Naive thymus-derived CD4-positive, alpha-beta T cell (primary cell): ENCODE measurements at regions of chr7 and their contacts with region 1.

Region 1: GRCh38 chr7:36677769-36678437 is 46.4 kb downstream of the AOAH start:
- DNase-seq: peak in 5 of 9 donors; percentile 5 to 68 (median 25)
- ATAC-seq: peak; percentile 19
- H3K4me3 ChIP-seq: peak overlapping the region; percentile 5
- H3K4me3 Mint-ChIP-seq: peak overlapping the region; percentile 46 to 84 (median 67)
- H3K27ac ChIP-seq: peak overlapping the region; percentile 55
- H3K27ac Mint-ChIP-seq: peak overlapping the region; percentile 83 to 98 (median 89)
- H3K4me1 ChIP-seq: peaks cover 14 to 29% of the 10 kb centered on the region in 2 donors
- H3K4me1 Mint-ChIP-seq: peaks cover 12 to 72% (median 57%) of the 10 kb centered on the region in 7 donors
- H3K27me3 ChIP-seq: no peaks in the 10 kb centered on the region
- H3K27me3 Mint-ChIP-seq: no peaks in the 10 kb centered on the region

Region 2: GRCh38 chr7:36563706-36564327 is 114.1 kb before region 1 on chr7:
- CTCF ChIA-PET with region 1: no interaction called
- POLR2A ChIA-PET with region 1: no interaction called
- intact Hi-C with region 1: no loop called
- DNase-seq: no peak
- ATAC-seq: no peak
- H3K4me3 ChIP-seq: no peak overlapping the region
- H3K4me3 Mint-ChIP-seq: no peak overlapping the region
- H3K27ac ChIP-seq: no peak overlapping the region
- H3K27ac Mint-ChIP-seq: peak overlapping the region in 2 of 9 donors; percentile 37 to 40
- H3K4me1 ChIP-seq: no peaks in the 10 kb centered on the region
- H3K4me1 Mint-ChIP-seq: peaks cover 0 to 13% (median 0%) of the 10 kb centered on the region in 7 donors
- H3K27me3 ChIP-seq: no peaks in the 10 kb centered on the region
- H3K27me3 Mint-ChIP-seq: no peaks in the 10 kb centered on the region

Region 3: GRCh38 chr7:36606976-36607720 is 70.8 kb before region 1 on chr7:
- CTCF ChIA-PET with region 1: no interaction called
- POLR2A ChIA-PET with region 1: no interaction called
- intact Hi-C with region 1: no loop called
- DNase-seq: no peak
- ATAC-seq: no peak
- H3K4me3 ChIP-seq: no peak overlapping the region
- H3K4me3 Mint-ChIP-seq: peak overlapping the region; percentile 35 to 86 (median 65)
- H3K27ac ChIP-seq: peak overlapping the region; percentile 43
- H3K27ac Mint-ChIP-seq: peak overlapping the region in 8 of 9 donors; percentile 64 to 93 (median 88)
- H3K4me1 ChIP-seq: peaks cover 0 to 43% of the 10 kb centered on the region in 2 donors
- H3K4me1 Mint-ChIP-seq: peaks cover 31 to 70% (median 58%) of the 10 kb centered on the region in 7 donors
- H3K27me3 ChIP-seq: no peaks in the 10 kb centered on the region
- H3K27me3 Mint-ChIP-seq: no peaks in the 10 kb centered on the region

Region 4: GRCh38 chr7:36639826-36640225 is 38.1 kb before region 1 on chr7:
- CTCF ChIA-PET with region 1: interaction called, 11 read pairs
- POLR2A ChIA-PET with region 1: interaction called, 16 read pairs
- intact Hi-C with region 1: no loop called
- DNase-seq: peak; percentile 14 to 81 (median 67)
- ATAC-seq: peak; percentile 88
- H3K4me3 ChIP-seq: peak overlapping the region; percentile 3
- H3K4me3 Mint-ChIP-seq: peak overlapping the region; percentile 54 to 83 (median 67)
- H3K27ac ChIP-seq: peak overlapping the region; percentile 67
- H3K27ac Mint-ChIP-seq: peak overlapping the region; percentile 85 to 99 (median 95)
- H3K4me1 ChIP-seq: peaks cover 46 to 70% of the 10 kb centered on the region in 2 donors
- H3K4me1 Mint-ChIP-seq: peaks cover 42 to 100% (median 95%) of the 10 kb centered on the region in 7 donors
- H3K27me3 ChIP-seq: no peaks in the 10 kb centered on the region
- H3K27me3 Mint-ChIP-seq: no peaks in the 10 kb centered on the region

Region 5: GRCh38 chr7:36723951-36724664 is 46.2 kb after region 1 on chr7 and contains the start of gene AOAH:
- CTCF ChIA-PET with region 1: interaction called, 4 read pairs
- POLR2A ChIA-PET with region 1: interaction called, 4 read pairs
- intact Hi-C with region 1: loop called (anchors 1 to 2 kb)
- DNase-seq: peak; percentile 44 to 93 (median 86)
- ATAC-seq: peak; percentile 97
- H3K4me3 ChIP-seq: peak within 1 kb of the TSS; percentile 64
- H3K4me3 Mint-ChIP-seq: peak within 1 kb of the TSS; percentile 69 to 98 (median 88)
- H3K27ac ChIP-seq: peak within 1 kb of the TSS; percentile 73
- H3K27ac Mint-ChIP-seq: peak within 1 kb of the TSS; percentile 86 to 99 (median 96)
- H3K4me1 ChIP-seq: peaks cover 45 to 48% of the 10 kb centered on the region in 2 donors
- H3K4me1 Mint-ChIP-seq: peaks cover 53 to 100% (median 89%) of the 10 kb centered on the region in 7 donors
- H3K27me3 ChIP-seq: no peaks in the 10 kb centered on the region
- H3K27me3 Mint-ChIP-seq: no peaks in the 10 kb centered on the region
- total RNA-seq, gene AOAH: 6.3 to 127 (median 22.1) TPM

Region 6: GRCh38 chr7:36784991-36785940 is 107.4 kb after region 1 on chr7:
- CTCF ChIA-PET with region 1: interaction called, 3 read pairs
- POLR2A ChIA-PET with region 1: no interaction called
- intact Hi-C with region 1: loop called in 1 of 2 experiments (anchors 1 kb)
- DNase-seq: peak; percentile 23 to 87 (median 84)
- ATAC-seq: peak; percentile 89
- H3K4me3 ChIP-seq: no peak overlapping the region
- H3K4me3 Mint-ChIP-seq: peak overlapping the region; percentile 35 to 85 (median 69)
- H3K27ac ChIP-seq: peak overlapping the region; percentile 78
- H3K27ac Mint-ChIP-seq: peak overlapping the region; percentile 92 to 99 (median 97)
- H3K4me1 ChIP-seq: peaks cover 59 to 87% of the 10 kb centered on the region in 2 donors
- H3K4me1 Mint-ChIP-seq: peaks cover 61 to 95% (median 83%) of the 10 kb centered on the region in 7 donors
- H3K27me3 ChIP-seq: no peaks in the 10 kb centered on the region
- H3K27me3 Mint-ChIP-seq: no peaks in the 10 kb centered on the region